ENCODE measurements at regions of chr11 and their contacts with region 1.

Region 1: GRCh38 chr11:93895106-93895862 is 44.9 kb upstream of the VSTM5 start:
- DNase-seq: no peak
- H3K4me3 ChIP-seq: no peak overlapping the region
- H3K27ac ChIP-seq: no peak overlapping the region
- H3K4me1 ChIP-seq: peaks cover 0 to 4% (median under 1%) of the 10 kb centered on the region in 4 experiments; a peak in 2 of 7 replicates
- H3K27me3 ChIP-seq: no peaks in the 10 kb centered on the region
- CTCF ChIP-seq: peak in 2 of 3 experiments; percentile 70 to 74; a peak in 3 of 4 replicates
- EP300 ChIP-seq: no peak
- POLR2A ChIP-seq: no peak
- RAD21 ChIP-seq: peak; percentile 96 to 97

Region 2: GRCh38 chr11:93908689-93909088 is 13.4 kb after region 1 on chr11:
- CTCF ChIA-PET with region 1: interaction called, 30 read pairs
- POLR2A ChIA-PET with region 1: interaction called, 5 read pairs
- DNase-seq: no peak
- H3K4me3 ChIP-seq: no peak overlapping the region
- H3K27ac ChIP-seq: no peak overlapping the region
- H3K4me1 ChIP-seq: peaks cover 0 to 4% (median 2%) of the 10 kb centered on the region in 4 experiments; a peak in 2 of 7 replicates
- H3K27me3 ChIP-seq: no peaks in the 10 kb centered on the region
- CTCF ChIP-seq: no peak
- EP300 ChIP-seq: no peak
- POLR2A ChIP-seq: no peak
- RAD21 ChIP-seq: no peak

Region 3: GRCh38 chr11:93983542-93984195 is 88.4 kb after region 1 on chr11:
- CTCF ChIA-PET with region 1: no interaction called
- POLR2A ChIA-PET with region 1: no interaction called
- DNase-seq: no peak
- H3K4me3 ChIP-seq: no peak overlapping the region
- H3K27ac ChIP-seq: no peak overlapping the region
- H3K4me1 ChIP-seq: peaks cover 0 to 4% (median 0%) of the 10 kb centered on the region in 4 experiments; a peak in 1 of 7 replicates
- H3K27me3 ChIP-seq: no peaks in the 10 kb centered on the region
- CTCF ChIP-seq: no peak
- EP300 ChIP-seq: no peak
- POLR2A ChIP-seq: no peak
- RAD21 ChIP-seq: no peak

Region 4: GRCh38 chr11:94171693-94172440 is 276.6 kb after region 1 on chr11:
- CTCF ChIA-PET with region 1: interaction called, 15 read pairs
- POLR2A ChIA-PET with region 1: no interaction called
- DNase-seq: peak; percentile 36 to 83
- H3K4me3 ChIP-seq: no peak overlapping the region
- H3K27ac ChIP-seq: no peak overlapping the region
- H3K4me1 ChIP-seq: peaks cover 3 to 14% (median 5%) of the 10 kb centered on the region in 4 experiments; a peak in 4 of 7 replicates
- H3K27me3 ChIP-seq: no peaks in the 10 kb centered on the region
- CTCF ChIP-seq: peak; percentile 67 to 79 (median 78)
- EP300 ChIP-seq: no peak
- POLR2A ChIP-seq: no peak
- RAD21 ChIP-seq: peak; percentile 74 to 80

Region 5: GRCh38 chr11:94400839-94401772 is 505.8 kb after region 1 on chr11 and contains the start of gene GPR83:
- CTCF ChIA-PET with region 1: interaction called, 10 read pairs
- POLR2A ChIA-PET with region 1: no interaction called
- DNase-seq: peak in 1 of 2 experiments; percentile 59
- H3K4me3 ChIP-seq: peak within 1 kb of the TSS; percentile 32 to 66 (median 41)
- H3K27ac ChIP-seq: no peak within 1 kb of the TSS
- H3K4me1 ChIP-seq: peaks cover 0 to 2% (median 0%) of the 10 kb centered on the region in 4 experiments; a peak in 2 of 7 replicates
- H3K27me3 ChIP-seq: peaks cover 9 to 32% (median 29%) of the 10 kb centered on the region in 4 experiments
- CTCF ChIP-seq: peak in 1 of 3 experiments; percentile 3; a peak in 1 of 4 replicates
- EP300 ChIP-seq: no peak
- POLR2A ChIP-seq: peak in 1 of 2 experiments; percentile 62; a peak in 2 of 3 replicates
- RAD21 ChIP-seq: peak; percentile 10 to 21; a peak in 2 of 4 replicates
- total RNA-seq, gene GPR83: 1.3 and 1.5 TPM in 2 replicates

Region 6: GRCh38 chr11:94504689-94505293 is 609.5 kb after region 1 on chr11:
- CTCF ChIA-PET with region 1: interaction called, 54 read pairs
- POLR2A ChIA-PET with region 1: no interaction called
- DNase-seq: no peak
- H3K4me3 ChIP-seq: no peak overlapping the region
- H3K27ac ChIP-seq: no peak overlapping the region
- H3K4me1 ChIP-seq: no peaks in the 10 kb centered on the region
- H3K27me3 ChIP-seq: no peaks in the 10 kb centered on the region
- CTCF ChIP-seq: peak in 2 of 3 experiments; percentile 26 to 51; a peak in 2 of 4 replicates
- EP300 ChIP-seq: no peak
- POLR2A ChIP-seq: no peak
- RAD21 ChIP-seq: peak; percentile 68 to 71

Measured in H1 (cell line).